Activated CD4-positive, alpha-beta T cell treated with anti-CD3 and anti-CD28 coated beads for 36 hours (primary cell): ENCODE measurements at regions of chr2 and their contacts with region 1.

Region 1: DNA sequence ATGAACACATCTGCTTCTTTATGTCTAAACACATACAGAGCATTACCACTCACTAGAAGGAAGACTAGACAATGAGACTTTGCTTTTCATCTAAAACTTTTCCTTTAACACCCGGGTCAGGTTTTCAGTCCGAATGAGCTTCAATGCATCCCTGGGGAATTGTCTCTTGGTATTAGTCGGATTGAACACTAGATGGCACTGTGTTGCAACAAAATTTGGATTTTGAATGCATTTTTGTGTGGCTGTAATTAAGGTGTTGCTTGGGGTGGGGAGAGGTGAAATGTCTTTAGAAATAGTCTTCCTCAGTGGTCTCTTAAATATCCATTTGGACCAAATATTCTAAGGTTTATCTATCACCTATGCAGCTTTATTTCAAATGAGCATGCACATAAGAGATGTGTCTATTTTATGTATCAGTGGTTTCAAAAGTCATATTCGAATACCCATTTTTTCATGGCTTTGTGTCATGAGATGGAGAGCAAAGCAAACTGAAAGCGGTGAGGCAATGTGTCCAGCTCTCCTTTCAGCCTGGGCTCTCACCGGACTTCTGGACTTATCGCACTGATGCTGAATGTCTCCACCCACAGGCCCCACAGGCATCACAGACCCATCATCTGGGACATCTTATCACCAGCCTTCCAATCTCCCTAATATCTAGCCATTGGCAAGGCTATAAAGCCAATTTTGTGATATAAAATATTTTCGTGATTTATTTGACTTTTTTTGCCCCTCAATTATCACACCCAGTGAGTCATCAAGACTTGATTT is 510.3 kb downstream of the RNF144A start:
- DNase-seq: no peak
- ATAC-seq: no peak
- H3K4me3 Mint-ChIP-seq: no peak overlapping the region
- H3K27ac Mint-ChIP-seq: peak overlapping the region; percentile 51
- H3K4me1 Mint-ChIP-seq: peaks cover 41% of the 10 kb centered on the region
- H3K27me3 Mint-ChIP-seq: peaks cover 9% of the 10 kb centered on the region

Region 2: DNA sequence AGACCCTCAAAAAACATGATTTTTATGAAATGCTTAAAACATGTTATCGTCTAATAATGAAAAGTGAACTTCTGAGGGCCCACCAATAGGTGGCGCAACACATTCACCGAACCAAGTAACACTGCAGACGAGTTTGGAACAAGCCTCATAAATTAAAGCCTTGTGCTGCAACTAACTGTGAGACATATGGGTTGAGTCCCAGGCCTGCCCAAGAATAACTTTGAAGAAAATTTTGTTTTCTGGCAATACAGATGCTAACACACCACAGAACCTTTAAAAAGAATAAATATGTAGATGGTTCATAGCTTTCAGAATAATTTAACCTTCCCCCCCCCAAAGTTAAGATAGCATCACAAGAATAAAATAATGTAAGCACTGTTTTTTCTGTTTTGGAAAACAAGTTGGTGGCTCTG is 224.4 kb before region 1 on chr2:
- CTCF ChIA-PET with region 1: interaction called, 5 read pairs
- POLR2A ChIA-PET with region 1: no interaction called
- intact Hi-C with region 1: loop called (anchors 5 kb)
- DNase-seq: peak; percentile 78
- ATAC-seq: peak; percentile 55
- H3K4me3 Mint-ChIP-seq: no peak overlapping the region
- H3K27ac Mint-ChIP-seq: no peak overlapping the region
- H3K4me1 Mint-ChIP-seq: peaks cover 1% of the 10 kb centered on the region
- H3K27me3 Mint-ChIP-seq: no peaks in the 10 kb centered on the region

Region 3: GRCh38 chr2:7567646-7568045 is 140.2 kb after region 1 on chr2:
- CTCF ChIA-PET with region 1: interaction called, 11 read pairs
- POLR2A ChIA-PET with region 1: interaction called, 3 read pairs
- intact Hi-C with region 1: loop called in 1 of 2 experiments (anchors 2 kb)
- DNase-seq: peak; percentile 81
- ATAC-seq: peak; percentile 93
- H3K4me3 Mint-ChIP-seq: peak overlapping the region; percentile 9
- H3K27ac Mint-ChIP-seq: peak overlapping the region; percentile 88
- H3K4me1 Mint-ChIP-seq: peaks cover 55% of the 10 kb centered on the region
- H3K27me3 Mint-ChIP-seq: no peaks in the 10 kb centered on the region

Region 4: DNA sequence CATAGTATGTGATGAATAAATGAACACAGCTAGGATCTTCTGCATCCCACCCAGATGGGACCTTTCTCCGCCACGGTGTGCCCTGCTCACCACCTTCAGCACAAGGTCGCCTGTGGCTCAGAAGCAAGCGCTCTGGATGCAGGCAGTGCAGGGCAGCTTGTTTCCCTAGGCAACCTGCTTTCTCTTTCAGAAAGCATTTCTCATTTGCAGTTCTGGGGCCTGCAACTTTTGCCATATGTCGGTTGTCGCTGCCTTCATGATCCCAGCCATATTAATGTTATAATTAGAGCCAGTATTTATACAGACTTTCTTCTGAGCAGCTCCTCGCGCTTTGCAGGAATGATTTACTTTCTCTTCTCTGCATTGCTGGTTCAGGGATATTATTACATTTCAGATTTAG is 182.5 kb after region 1 on chr2:
- CTCF ChIA-PET with region 1: no interaction called
- POLR2A ChIA-PET with region 1: no interaction called
- intact Hi-C with region 1: no loop called
- DNase-seq: peak; percentile 16
- ATAC-seq: no peak
- H3K4me3 Mint-ChIP-seq: no peak overlapping the region
- H3K27ac Mint-ChIP-seq: peak overlapping the region; percentile 48
- H3K4me1 Mint-ChIP-seq: peaks cover 27% of the 10 kb centered on the region
- H3K27me3 Mint-ChIP-seq: no peaks in the 10 kb centered on the region

Region 5: DNA sequence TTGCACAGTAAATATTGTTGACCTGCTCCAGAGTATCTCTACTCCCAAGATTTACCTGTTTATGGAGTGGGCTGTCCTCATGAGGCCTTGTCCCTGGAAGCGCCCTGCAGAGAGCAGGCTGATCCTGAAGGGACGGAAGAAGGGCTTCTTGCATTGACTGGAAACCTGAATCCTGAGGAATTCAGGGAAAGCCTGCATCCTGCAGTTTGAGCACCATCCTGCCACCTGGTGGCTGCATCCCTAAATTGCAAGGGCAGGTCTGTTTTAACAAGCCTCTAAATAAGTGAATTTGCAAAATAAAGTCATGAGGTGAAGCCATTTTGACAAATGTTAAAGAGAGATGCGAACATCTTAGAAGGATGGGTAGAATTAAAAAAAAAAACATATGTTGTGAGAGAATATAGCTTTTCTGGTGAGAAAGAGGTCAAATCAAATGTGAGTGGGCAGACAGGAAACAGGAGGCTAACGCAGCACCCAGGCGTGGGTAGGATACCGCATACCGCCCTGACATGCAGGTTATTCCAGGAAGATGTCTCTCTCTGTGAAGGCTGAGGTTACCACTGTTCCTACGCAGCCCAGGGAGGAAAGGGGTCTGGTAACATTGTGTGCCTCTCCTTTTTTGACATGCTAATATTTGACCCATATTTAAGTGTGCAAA is 244.7 kb after region 1 on chr2:
- CTCF ChIA-PET with region 1: interaction called, 17 read pairs
- POLR2A ChIA-PET with region 1: no interaction called
- intact Hi-C with region 1: loop called (anchors 1 kb)
- DNase-seq: peak; percentile 80
- ATAC-seq: peak; percentile 76
- H3K4me3 Mint-ChIP-seq: peak overlapping the region; percentile 48
- H3K27ac Mint-ChIP-seq: peak overlapping the region; percentile 96
- H3K4me1 Mint-ChIP-seq: peaks cover 55% of the 10 kb centered on the region
- H3K27me3 Mint-ChIP-seq: no peaks in the 10 kb centered on the region

Region 6: GRCh38 chr2:7773362-7774360 is 346.2 kb after region 1 on chr2:
- CTCF ChIA-PET with region 1: no interaction called
- POLR2A ChIA-PET with region 1: no interaction called
- intact Hi-C with region 1: loop called in 1 of 2 experiments (anchors 5 kb)
- DNase-seq: peak; percentile 66
- ATAC-seq: peak; percentile 76
- H3K4me3 Mint-ChIP-seq: peak overlapping the region; percentile 11
- H3K27ac Mint-ChIP-seq: peak overlapping the region; percentile 64
- H3K4me1 Mint-ChIP-seq: peaks cover 28% of the 10 kb centered on the region
- H3K27me3 Mint-ChIP-seq: peaks cover 3% of the 10 kb centered on the region

Region 7: DNA sequence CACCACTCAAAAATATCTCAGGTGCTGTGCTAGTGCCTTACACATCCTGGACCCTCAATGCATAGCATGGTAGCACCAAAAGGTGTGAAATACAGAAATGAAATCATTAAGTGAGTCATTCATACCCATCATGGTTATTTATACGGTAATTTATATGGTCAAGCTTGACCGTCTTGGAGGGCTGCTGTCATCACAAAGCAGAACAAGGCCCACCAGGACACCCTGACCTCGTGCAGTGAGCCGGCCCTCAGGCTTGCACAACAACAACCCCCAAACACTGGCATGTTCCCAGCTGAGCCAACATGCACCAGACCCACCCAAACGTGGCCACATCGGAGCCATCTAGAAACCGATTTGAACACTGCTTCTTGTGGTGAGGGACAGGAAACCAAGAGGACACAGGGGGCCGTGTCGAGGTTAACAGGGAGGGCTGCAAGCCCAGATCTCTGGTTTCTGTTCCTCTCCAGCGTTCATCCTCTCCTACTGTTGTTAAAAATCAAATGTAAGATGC is 875.9 kb after region 1 on chr2:
- CTCF ChIA-PET with region 1: no interaction called
- POLR2A ChIA-PET with region 1: no interaction called
- intact Hi-C with region 1: loop called in 1 of 2 experiments (anchors 10 kb)
- DNase-seq: peak; percentile 53
- ATAC-seq: peak; percentile 7
- H3K4me3 Mint-ChIP-seq: no peak overlapping the region
- H3K27ac Mint-ChIP-seq: peak overlapping the region; percentile 63
- H3K4me1 Mint-ChIP-seq: peaks cover 51% of the 10 kb centered on the region
- H3K27me3 Mint-ChIP-seq: peaks cover 5% of the 10 kb centered on the region